Left colon (tissue), 2 donors: ENCODE measurements at regions of chr9 and their contacts with region 1.

Region 1: DNA sequence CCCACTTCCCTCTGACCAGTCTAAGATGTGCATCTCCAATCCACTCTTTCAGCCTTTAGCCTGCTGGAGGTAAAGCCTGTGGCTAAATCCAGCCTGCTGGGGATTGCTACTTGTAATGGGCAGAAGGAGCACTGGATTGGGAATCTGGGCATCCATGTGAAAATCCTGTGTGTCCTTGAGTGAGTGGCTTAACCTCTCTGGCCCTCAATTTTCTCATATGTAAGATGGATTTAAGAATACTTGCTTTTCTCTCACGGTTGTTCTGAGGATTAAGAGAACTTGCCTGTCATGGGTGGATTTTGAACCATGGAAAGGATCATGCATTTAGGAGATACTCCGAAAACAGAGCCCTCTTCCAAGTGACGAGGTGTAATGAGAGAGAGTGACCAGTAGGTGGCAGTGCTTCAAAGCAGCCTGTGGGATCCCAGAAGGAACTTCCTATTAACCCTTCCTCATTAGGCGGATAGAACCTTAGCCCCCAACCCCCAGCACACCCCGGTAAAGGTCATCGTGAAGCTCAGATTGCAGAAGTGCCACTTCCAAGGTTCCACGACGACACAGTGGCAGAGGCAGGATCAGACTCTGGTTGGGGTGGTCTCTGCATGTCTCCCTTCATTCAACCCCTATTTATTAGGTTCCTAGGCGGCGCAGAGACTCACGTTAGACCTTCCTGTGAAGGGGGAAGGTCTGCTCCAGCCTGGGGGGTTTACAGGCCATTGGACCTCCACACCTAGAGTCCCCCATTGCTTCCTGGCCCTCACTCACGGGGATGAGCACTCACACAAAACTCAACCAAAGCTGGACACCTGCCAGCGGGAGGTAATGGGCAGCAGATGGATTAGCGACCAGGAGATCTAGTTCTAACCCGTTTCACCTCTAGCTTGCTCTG is 68.7 kb upstream of the ZNF618 start:
- DNase-seq: peak; percentile 30 to 34
- ATAC-seq: peak; percentile 66

Region 2: GRCh38 chr9:114033397-114034103 is 226.1 kb after region 1 on chr9:
- intact Hi-C with region 1: loop called in 1 of 2 experiments (anchors 10 kb)
- DNase-seq: peak in 1 of 2 donors; percentile 31
- ATAC-seq: peak; percentile 28